ENCODE measurements at regions of chr1 and their contacts with region 1.

Region 1: GRCh38 chr1:221435504-221435904 is 306.4 kb downstream of the DUSP10 start:
- DNase-seq: no peak
- ATAC-seq: peak; percentile 82

Region 2: GRCh38 chr1:220803401-220804201 is 631.9 kb before region 1 on chr1:
- intact Hi-C with region 1: loop called (anchors 10 kb)
- DNase-seq: no peak
- ATAC-seq: peak; percentile 59

Region 3: GRCh38 chr1:220873868-220874655 is 561.4 kb before region 1 on chr1:
- intact Hi-C with region 1: loop called (anchors 5 kb)
- DNase-seq: peak; percentile 41
- ATAC-seq: peak; percentile 33

Region 4: GRCh38 chr1:221268295-221268694 is 167.2 kb before region 1 on chr1:
- intact Hi-C with region 1: loop called (anchors 5 kb)
- DNase-seq: no peak
- ATAC-seq: peak; percentile 46